Mammary epithelial cell (primary cell): ENCODE measurements at regions of chr6 and their contacts with region 1.

Region 1: DNA sequence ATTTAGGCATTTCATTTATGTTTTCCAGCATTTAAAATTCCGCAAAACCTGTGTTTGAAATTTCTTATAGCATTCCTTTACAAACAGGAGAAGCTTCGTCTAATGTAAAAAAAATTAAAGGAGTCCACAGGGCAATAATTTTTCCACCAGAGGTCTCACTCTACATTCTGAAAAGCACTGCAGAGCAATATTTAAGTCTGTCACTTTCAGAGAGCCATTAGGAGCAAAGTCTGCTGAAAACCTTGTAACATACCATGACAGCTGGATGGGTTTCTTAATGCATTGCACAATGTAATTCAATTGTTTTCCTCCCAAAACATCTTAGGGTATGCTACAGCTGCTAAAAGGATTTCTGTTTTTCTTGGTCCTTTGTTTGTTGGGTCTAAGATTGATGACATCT is 18.0 kb downstream of the BAG2 start:
- DNase-seq: peak; percentile 3
- H3K4me3 ChIP-seq: no peak overlapping the region
- H3K27ac ChIP-seq: no peak overlapping the region
- H3K4me1 ChIP-seq: no peaks in the 10 kb centered on the region
- H3K27me3 ChIP-seq: no peaks in the 10 kb centered on the region
- CTCF ChIP-seq: peak in 1 of 2 donors; percentile 37

Region 2: DNA sequence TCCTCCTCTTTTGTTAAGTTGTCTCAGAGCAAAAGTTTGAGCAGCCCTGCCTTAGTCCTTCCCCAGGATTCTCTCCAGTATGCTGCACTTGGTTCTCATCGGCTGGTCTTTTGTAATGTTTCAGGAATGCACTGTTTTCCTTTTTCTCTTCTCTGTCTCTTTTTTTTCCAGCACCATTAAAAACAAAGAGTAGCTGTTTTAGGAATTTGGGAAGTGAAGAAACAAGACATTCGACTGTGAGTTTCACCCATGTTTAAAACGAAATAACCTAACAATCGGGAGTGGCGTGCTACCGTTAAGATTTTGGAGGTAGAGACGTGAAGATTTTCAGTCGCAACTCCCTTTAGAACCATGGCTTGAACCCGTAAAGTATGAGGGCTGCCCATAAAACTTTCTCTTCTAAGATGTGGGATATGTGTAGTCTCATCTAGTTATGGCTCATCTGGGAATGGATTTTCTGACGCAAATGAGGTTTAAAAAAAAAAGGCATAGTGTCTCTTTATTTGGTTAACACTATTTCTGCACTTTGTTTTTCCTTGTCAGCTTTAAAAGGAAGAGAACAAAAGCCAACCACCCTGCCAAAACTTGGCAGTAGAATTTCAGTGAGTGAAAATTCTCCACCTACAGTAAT is 67.9 kb after region 1 on chr6:
- CTCF ChIA-PET with region 1: no interaction called
- dilution Hi-C with region 1: no loop called
- in situ Hi-C with region 1: no loop called
- intact Hi-C with region 1: loop called (anchors 10 kb)
- DNase-seq: no peak
- H3K4me3 ChIP-seq: no peak overlapping the region
- H3K27ac ChIP-seq: no peak overlapping the region
- H3K4me1 ChIP-seq: no peaks in the 10 kb centered on the region
- H3K27me3 ChIP-seq: no peaks in the 10 kb centered on the region
- CTCF ChIP-seq: no peak